Activated naive CD4-positive, alpha-beta T cell treated with anti-CD3 and anti-CD28 coated beads for 36 hours (primary cell): ENCODE measurements at regions of chr11 and their contacts with region 1.

Region 1: DNA sequence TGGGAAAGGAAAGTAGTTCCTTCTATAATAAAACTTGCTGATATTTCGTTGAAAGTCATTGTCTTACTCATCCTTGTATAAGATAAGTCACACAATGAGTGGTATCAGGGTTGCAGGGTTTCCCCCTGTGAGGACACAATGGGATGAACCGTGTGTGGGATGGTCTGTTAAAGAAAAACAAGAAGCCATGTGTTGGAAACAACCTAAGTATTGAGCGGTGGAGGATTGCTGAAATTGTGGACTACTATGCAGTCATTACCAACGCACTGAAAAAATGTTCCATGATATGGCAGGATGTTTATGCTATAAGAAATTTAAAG is 28.6 kb downstream of the PTPRJ start:
- DNase-seq: peak; percentile 91
- H3K4me3 Mint-ChIP-seq: no peak overlapping the region
- H3K27ac Mint-ChIP-seq: peak overlapping the region; percentile 76
- H3K4me1 Mint-ChIP-seq: peaks cover 87% of the 10 kb centered on the region
- H3K27me3 Mint-ChIP-seq: no peaks in the 10 kb centered on the region

Region 2: GRCh38 chr11:47946682-47947575 is 62.0 kb before region 1 on chr11:
- CTCF ChIA-PET with region 1: no interaction called
- intact Hi-C with region 1: loop called (anchors 1 kb)
- DNase-seq: peak; percentile 66
- H3K4me3 Mint-ChIP-seq: no peak overlapping the region
- H3K27ac Mint-ChIP-seq: no peak overlapping the region
- H3K4me1 Mint-ChIP-seq: peaks cover 38% of the 10 kb centered on the region
- H3K27me3 Mint-ChIP-seq: no peaks in the 10 kb centered on the region

Region 3: DNA sequence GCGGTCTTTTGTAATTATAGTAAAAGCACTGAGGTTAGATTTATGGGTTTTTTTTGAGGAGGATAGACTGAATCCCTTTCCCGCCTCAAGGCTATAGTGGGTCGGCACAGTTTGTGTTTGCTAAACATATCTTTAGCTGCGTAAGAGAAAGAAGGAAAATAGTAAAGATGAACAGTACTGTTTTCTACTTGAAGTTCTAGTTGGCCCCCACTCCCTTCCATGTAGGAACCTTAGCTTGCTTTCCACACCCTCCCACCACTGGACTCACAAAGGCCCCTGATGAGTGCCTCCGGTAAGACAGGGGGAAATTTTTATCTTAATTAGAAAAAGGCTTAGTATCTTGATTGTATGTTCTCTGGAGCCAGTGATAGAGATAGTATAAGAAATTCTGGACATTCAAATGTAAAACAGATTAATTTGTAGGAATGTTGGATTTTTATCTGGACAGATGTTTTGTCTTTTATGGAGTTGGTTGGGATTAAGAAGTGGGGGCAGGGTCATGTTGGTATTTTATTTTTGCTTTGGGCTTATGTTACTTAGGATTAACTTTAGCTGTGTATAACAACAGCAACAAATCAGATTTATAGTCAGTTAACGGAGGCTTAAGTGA is 20.9 kb after region 1 on chr11:
- CTCF ChIA-PET with region 1: no interaction called
- intact Hi-C with region 1: no loop called
- DNase-seq: no peak
- H3K4me3 Mint-ChIP-seq: no peak overlapping the region
- H3K27ac Mint-ChIP-seq: peak overlapping the region; percentile 16
- H3K4me1 Mint-ChIP-seq: peaks cover 51% of the 10 kb centered on the region
- H3K27me3 Mint-ChIP-seq: no peaks in the 10 kb centered on the region